AG04450 (cell line): ENCODE measurements at regions of chr14 and their contacts with region 1.

Region 1: DNA sequence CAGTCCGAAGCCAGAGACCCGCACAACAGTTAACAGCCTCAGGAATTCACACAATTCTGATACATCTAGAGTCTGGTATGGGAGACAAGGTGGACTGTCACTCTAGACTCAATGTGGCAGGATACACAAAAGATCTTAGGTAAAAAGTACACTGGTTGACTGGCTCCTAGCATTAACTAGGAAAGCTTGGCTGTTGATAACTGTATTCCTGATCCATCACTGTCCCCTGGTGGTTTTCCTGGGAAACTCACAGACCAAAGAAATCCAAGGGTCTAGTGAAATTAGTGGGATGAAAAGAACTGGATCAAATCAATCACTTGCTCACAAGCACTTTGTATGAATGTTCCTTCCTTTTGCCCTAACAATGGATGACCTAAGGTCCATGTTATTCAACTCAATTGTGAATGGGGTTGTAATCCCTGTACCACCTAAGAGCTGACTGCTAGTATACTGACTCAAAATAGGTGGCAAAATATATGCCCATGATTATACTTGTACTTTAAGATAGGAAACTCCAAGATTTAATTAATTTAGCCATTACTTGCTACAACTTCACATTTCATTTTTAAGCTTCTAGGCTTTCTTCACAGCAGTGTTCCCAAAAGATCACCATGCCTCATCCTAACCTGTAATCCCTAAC is 14.0 kb downstream of the NPC2 start:
- DNase-seq: no peak
- H3K4me3 ChIP-seq: no peak overlapping the region
- H3K27ac ChIP-seq: no peak overlapping the region
- H3K27me3 ChIP-seq: no peaks in the 10 kb centered on the region
- CTCF ChIP-seq: peak; percentile 95

Region 2: DNA sequence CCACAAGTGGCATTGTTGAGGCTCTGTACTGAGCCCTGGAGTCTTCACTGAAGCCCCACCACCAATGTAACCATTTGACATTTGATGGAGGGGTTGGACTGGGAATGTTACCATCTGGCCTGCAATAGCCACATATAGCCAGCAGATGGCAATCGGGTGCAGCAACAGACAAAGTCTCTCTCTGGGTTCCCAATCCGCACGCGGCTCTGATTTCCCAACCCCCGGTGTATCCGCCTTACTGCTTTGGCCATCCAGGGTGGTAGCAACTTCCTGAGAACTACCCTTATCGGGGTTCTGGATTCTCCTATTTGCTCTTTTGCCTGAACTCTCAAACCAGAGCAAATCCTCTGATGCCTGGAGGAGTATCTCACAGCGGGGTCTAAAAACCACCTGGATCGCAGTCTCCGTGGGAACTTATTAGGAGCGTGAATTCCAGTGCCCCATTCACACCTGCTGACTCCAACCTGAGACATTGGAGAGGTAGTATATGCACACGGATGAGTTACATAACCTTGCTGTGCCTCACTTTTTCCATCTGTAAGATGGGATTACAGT is 116.7 kb before region 1 on chr14:
- CTCF ChIA-PET with region 1: interaction called, 42 read pairs
- POLR2A ChIA-PET with region 1: no interaction called
- DNase-seq: peak; percentile 34
- H3K4me3 ChIP-seq: no peak overlapping the region
- H3K27ac ChIP-seq: peak overlapping the region; percentile 31
- H3K27me3 ChIP-seq: peaks cover 38% of the 10 kb centered on the region
- CTCF ChIP-seq: peak; percentile 98

Region 3: DNA sequence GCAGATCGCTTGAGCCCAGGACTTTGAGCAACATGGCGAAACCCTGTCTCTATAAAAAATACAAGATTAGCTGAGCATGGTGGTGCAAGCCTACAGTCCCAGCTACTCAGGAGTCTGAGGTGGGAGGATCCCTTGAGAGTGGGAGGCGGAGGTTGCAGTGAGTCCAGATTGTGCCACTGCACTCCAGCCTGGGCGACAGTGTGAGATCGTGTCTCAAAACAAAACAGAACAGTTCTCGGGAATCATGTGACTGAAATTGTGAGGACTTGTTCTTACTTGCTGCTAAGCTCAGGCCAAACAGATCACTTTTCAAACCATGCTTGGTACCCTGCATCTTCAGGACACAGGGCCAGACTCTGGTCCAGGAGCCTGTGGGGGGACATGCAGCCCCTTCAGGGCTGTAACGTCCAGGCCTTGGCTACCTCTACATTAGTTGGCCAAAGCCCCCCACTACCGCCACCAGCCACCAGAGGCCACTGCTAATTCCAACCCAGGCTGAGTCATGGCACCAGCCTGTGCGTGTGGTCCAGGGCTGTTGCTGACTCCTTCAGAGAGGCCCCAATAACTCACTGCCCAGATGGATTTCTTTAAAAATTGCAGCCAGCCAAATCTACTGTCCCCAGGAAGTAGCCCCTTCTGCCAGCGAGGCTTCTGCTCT is 19.7 kb before region 1 on chr14:
- CTCF ChIA-PET with region 1: interaction called, 19 read pairs
- POLR2A ChIA-PET with region 1: interaction called, 3 read pairs
- DNase-seq: peak; percentile 8
- H3K4me3 ChIP-seq: no peak overlapping the region
- H3K27ac ChIP-seq: no peak overlapping the region
- H3K27me3 ChIP-seq: peaks cover 21% of the 10 kb centered on the region
- CTCF ChIP-seq: peak; percentile 79